ENCODE measurements at regions of chr12 and their contacts with region 1.

Region 1: GRCh38 chr12:12716793-12717585 is at the start of gene CDKN1B:
- DNase-seq: peak; percentile 78 to 84 (median 84)
- H3K4me3 ChIP-seq: peak within 1 kb of the TSS; percentile 85 to 99 (median 92)
- H3K4me3 Mint-ChIP-seq: peak within 1 kb of the TSS; percentile 97 to 99
- H3K27ac ChIP-seq: peak within 1 kb of the TSS; percentile 96 to 97
- H3K27ac Mint-ChIP-seq: peak within 1 kb of the TSS; percentile 97 to 99 (median 98)
- H3K4me1 ChIP-seq: peaks cover 44 to 54% of the 10 kb centered on the region in 2 donors
- H3K4me1 Mint-ChIP-seq: peaks cover 53% of the 10 kb centered on the region
- H3K27me3 ChIP-seq: no peaks in the 10 kb centered on the region
- H3K27me3 Mint-ChIP-seq: peaks cover 0 to 1% (median 0%) of the 10 kb centered on the region in 3 donors
- CTCF ChIP-seq: no peak
- polyA plus RNA-seq, gene CDKN1B: 9.2 to 98.1 (median 9.5) TPM

Region 2: DNA sequence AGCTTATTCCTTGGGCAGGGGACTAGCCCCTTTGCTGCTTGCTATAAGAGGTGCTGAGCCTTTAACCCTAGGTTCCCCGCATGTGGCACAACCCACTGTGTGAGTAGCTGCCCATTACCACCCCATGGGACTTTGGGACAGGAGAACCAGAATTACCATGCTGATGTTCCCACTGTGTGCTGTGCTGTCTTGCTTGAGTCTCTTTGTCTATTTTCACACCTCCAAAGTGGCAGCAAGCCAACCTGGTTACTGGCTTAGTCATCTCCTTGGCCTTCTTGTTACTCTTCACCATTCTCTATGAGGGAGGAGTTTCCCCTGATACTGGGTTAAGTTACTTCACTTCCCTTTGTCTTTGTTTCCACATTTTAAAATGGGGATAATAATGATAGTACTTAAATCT is 1140.9 kb before region 1 on chr12:
- intact Hi-C with region 1: loop called in 1 of 2 experiments (anchors 10 kb)
- DNase-seq: peak; percentile 70 to 88 (median 78)
- H3K4me3 ChIP-seq: no peak overlapping the region
- H3K4me3 Mint-ChIP-seq: no peak overlapping the region
- H3K27ac ChIP-seq: peak overlapping the region in 1 of 2 donors; percentile 60
- H3K27ac Mint-ChIP-seq: peak overlapping the region in 4 of 7 donors; percentile 25 to 86 (median 52)
- H3K4me1 ChIP-seq: peaks cover 32 to 45% of the 10 kb centered on the region in 2 donors
- H3K4me1 Mint-ChIP-seq: peaks cover 42% of the 10 kb centered on the region
- H3K27me3 ChIP-seq: no peaks in the 10 kb centered on the region
- H3K27me3 Mint-ChIP-seq: peaks cover 0 to 3% (median 0%) of the 10 kb centered on the region in 3 donors
- CTCF ChIP-seq: no peak

Region 3: GRCh38 chr12:12356886-12357718 is 359.9 kb before region 1 on chr12 and contains the start of gene BORCS5:
- intact Hi-C with region 1: loop called (anchors 5 to 10 kb)
- DNase-seq: peak; percentile 97 to 98 (median 98)
- H3K4me3 ChIP-seq: peak within 1 kb of the TSS; percentile 67 to 84 (median 76)
- H3K4me3 Mint-ChIP-seq: peak within 1 kb of the TSS; percentile 90 to 96
- H3K27ac ChIP-seq: peak within 1 kb of the TSS; percentile 90 to 96
- H3K27ac Mint-ChIP-seq: peak within 1 kb of the TSS; percentile 97 to 99 (median 98)
- H3K4me1 ChIP-seq: peaks cover 18 to 24% of the 10 kb centered on the region in 2 donors
- H3K4me1 Mint-ChIP-seq: peaks cover 30% of the 10 kb centered on the region
- H3K27me3 ChIP-seq: no peaks in the 10 kb centered on the region
- H3K27me3 Mint-ChIP-seq: peaks cover 0 to 5% (median 3%) of the 10 kb centered on the region in 3 donors
- CTCF ChIP-seq: no peak
- polyA plus RNA-seq, gene BORCS5: 8.5 to 15.1 (median 9.6) TPM

Region 4: DNA sequence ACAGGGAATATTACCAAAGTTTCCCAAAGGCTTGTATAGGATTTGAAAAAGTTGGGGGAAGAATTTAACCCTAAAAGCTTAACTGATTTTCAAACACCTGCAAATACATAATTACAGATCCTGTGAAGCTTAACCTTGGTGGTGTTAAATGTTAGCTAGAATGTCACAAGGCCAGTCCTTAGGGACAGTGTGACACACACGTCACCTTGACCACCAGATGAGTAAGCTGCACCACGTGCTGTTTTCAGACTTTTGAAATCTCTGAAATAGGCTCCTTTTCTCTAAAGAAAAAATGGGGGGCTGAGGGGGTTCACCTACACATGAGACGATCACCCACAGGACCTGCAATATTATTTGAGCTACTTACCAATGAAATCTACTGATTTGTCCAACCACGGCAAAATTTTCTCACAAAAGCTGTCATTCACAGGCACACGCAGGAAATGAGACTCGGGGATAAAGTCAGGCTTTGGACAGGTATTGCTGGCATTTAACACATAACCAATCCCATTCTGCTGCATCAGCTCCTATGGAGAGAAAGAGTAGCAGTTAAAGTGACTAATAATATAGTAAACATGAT is 230.2 kb before region 1 on chr12:
- intact Hi-C with region 1: no loop called
- DNase-seq: no peak
- H3K4me3 ChIP-seq: no peak overlapping the region
- H3K4me3 Mint-ChIP-seq: no peak overlapping the region
- H3K27ac ChIP-seq: no peak overlapping the region
- H3K27ac Mint-ChIP-seq: no peak overlapping the region
- H3K4me1 ChIP-seq: peaks cover 2 to 4% of the 10 kb centered on the region in 2 donors
- H3K4me1 Mint-ChIP-seq: peaks cover 6% of the 10 kb centered on the region
- H3K27me3 ChIP-seq: no peaks in the 10 kb centered on the region
- H3K27me3 Mint-ChIP-seq: no peaks in the 10 kb centered on the region
- CTCF ChIP-seq: no peak

Region 5: DNA sequence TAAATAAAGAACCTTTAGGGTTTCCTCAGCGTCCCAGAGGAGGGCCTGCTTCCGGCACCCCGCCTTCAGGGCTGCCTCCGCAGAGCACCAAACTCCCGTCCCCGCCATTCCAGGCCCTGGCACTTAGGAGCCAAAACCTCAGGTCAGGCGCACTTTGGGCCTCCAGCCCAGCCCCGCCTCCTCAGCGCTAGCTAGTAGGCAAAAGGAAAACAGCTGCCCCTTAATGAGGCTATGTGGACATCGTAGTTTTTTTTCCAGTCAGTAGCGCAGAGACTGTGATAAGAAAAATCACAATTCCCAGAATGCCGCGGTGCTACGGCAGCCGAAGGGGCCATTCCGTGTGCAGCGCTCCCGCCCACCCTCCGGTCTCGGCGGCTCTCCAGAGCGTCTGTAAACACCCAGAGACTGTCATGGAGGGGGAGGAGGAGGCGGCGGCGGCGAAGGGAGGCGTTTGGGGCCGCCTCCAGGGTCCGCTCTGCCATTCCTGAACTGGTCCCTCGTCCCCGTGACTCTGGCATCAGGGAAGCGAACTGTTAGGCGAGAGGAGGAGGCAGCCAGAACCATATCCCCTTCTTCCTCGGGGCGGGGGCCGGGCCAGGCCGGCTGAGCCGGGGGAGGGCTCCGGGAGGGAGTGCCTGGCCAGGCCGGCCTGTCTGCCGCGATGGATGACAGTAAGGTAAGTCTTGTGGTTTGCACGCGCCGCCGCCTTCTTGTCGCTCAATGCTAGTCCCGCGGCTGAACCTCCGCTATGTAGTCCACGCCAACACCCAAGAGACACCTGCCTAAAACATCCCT is 105.3 kb before region 1 on chr12 and contains the start of gene CREBL2:
- intact Hi-C with region 1: loop called (anchors 5 kb)
- DNase-seq: peak; percentile 77 to 86 (median 85)
- H3K4me3 ChIP-seq: peak within 1 kb of the TSS; percentile 62 to 84 (median 67)
- H3K4me3 Mint-ChIP-seq: peak within 1 kb of the TSS; percentile 93
- H3K27ac ChIP-seq: peak within 1 kb of the TSS; percentile 77 to 87
- H3K27ac Mint-ChIP-seq: peak within 1 kb of the TSS; percentile 89 to 94 (median 91)
- H3K4me1 ChIP-seq: peaks cover 41 to 46% of the 10 kb centered on the region in 2 donors
- H3K4me1 Mint-ChIP-seq: peaks cover 48% of the 10 kb centered on the region
- H3K27me3 ChIP-seq: no peaks in the 10 kb centered on the region
- H3K27me3 Mint-ChIP-seq: no peaks in the 10 kb centered on the region
- CTCF ChIP-seq: no peak
- polyA plus RNA-seq, gene CREBL2: 14.4 to 45.9 (median 38.2) TPM

Region 6: DNA sequence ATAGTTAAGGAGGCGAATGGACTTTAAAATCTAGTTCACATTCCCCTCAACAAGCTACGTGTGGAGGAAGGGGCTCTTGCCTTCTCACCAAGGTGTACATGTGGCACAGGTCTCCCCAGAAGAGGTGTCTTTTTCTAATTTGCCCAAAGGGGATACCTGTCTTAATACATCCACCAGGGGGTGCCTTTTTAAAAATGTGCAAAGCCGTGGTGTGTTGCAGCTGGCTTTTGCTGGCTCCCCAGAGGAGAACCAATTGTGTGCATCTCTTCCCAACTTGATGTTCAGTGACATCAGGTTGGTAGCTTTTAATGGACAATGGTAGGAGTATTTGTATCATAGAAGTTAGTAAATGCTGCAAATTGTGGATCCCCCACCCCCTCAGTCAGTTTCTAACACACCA is 71.5 kb before region 1 on chr12:
- intact Hi-C with region 1: no loop called
- DNase-seq: peak; percentile 15 to 25 (median 20)
- H3K4me3 ChIP-seq: no peak overlapping the region
- H3K4me3 Mint-ChIP-seq: no peak overlapping the region
- H3K27ac ChIP-seq: no peak overlapping the region
- H3K27ac Mint-ChIP-seq: no peak overlapping the region
- H3K4me1 ChIP-seq: no peaks in the 10 kb centered on the region
- H3K4me1 Mint-ChIP-seq: no peaks in the 10 kb centered on the region
- H3K27me3 ChIP-seq: no peaks in the 10 kb centered on the region
- H3K27me3 Mint-ChIP-seq: peaks cover 0 to 1% (median 0%) of the 10 kb centered on the region in 3 donors
- CTCF ChIP-seq: peak; percentile 57

Region 7: GRCh38 chr12:12749433-12749832 is 32.4 kb after region 1 on chr12:
- intact Hi-C with region 1: no loop called
- DNase-seq: no peak
- H3K4me3 ChIP-seq: no peak overlapping the region
- H3K4me3 Mint-ChIP-seq: no peak overlapping the region
- H3K27ac ChIP-seq: peak overlapping the region in 1 of 2 donors; percentile 18
- H3K27ac Mint-ChIP-seq: peak overlapping the region in 1 of 7 donors; percentile 42
- H3K4me1 ChIP-seq: no peaks in the 10 kb centered on the region
- H3K4me1 Mint-ChIP-seq: no peaks in the 10 kb centered on the region
- H3K27me3 ChIP-seq: no peaks in the 10 kb centered on the region
- H3K27me3 Mint-ChIP-seq: no peaks in the 10 kb centered on the region
- CTCF ChIP-seq: no peak

Region 8: DNA sequence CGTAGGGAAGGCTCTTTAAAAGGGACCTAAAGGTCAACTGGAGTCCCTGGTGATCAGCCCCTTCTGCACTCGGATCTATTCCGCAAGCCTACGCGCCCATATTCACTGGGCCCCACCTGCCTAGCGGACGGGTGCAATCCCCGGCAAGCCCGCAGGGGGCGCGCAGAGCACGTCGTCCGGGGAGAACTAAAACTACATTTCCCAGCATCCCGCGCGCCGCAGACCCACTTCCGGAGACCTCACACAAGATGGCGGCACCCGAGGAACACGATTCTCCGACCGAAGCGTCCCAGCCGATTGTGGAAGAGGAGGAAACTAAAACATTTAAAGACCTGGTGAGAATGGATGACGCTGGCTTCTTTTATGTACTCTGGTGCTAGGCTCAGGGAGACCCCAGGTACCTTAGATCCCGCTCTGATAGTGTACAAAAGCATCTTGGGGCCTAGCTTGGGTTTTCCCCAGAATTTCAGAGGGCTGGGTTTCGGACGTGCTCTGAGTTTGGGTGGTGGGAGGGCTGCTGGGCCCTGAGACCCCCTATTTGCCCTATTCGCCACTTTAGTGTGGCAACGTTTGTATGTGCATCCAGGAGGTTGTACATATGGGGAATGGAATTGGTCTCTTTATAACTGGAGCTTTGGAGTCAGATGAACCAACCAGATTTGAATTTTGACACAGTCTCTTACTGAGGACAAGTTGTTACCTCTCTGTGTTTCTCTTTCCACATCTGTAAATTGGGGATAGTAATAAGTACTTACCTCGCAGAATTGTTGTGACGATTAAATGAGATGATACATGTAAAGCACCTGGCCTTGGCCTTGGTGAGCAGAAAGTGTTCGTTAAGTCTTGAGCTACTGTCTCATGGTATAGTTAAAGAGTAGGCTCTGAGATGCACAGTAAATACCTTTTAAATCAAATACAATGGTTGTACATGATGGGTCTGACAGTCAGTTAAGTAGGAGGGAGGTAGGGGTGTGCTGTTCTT is 96.4 kb after region 1 on chr12 and contains the start of gene DDX47:
- intact Hi-C with region 1: loop called in 1 of 2 experiments (anchors 10 kb)
- DNase-seq: peak; percentile 90 to 92 (median 91)
- H3K4me3 ChIP-seq: peak within 1 kb of the TSS; percentile 89 to 94 (median 93)
- H3K4me3 Mint-ChIP-seq: peak within 1 kb of the TSS; percentile 95
- H3K27ac ChIP-seq: peak within 1 kb of the TSS; percentile 55 to 93
- H3K27ac Mint-ChIP-seq: peak within 1 kb of the TSS; percentile 94 to 98 (median 97)
- H3K4me1 ChIP-seq: peaks cover 32 to 61% of the 10 kb centered on the region in 2 donors
- H3K4me1 Mint-ChIP-seq: peaks cover 54% of the 10 kb centered on the region
- H3K27me3 ChIP-seq: no peaks in the 10 kb centered on the region
- H3K27me3 Mint-ChIP-seq: peaks cover 0 to 2% (median 0%) of the 10 kb centered on the region in 3 donors
- CTCF ChIP-seq: peak; percentile 97
- polyA plus RNA-seq, gene DDX47: 27.6 to 35.2 (median 30.1) TPM